Natural killer cell (primary cell): ENCODE measurements at regions of chr9 and their contacts with region 1.

Region 1: DNA sequence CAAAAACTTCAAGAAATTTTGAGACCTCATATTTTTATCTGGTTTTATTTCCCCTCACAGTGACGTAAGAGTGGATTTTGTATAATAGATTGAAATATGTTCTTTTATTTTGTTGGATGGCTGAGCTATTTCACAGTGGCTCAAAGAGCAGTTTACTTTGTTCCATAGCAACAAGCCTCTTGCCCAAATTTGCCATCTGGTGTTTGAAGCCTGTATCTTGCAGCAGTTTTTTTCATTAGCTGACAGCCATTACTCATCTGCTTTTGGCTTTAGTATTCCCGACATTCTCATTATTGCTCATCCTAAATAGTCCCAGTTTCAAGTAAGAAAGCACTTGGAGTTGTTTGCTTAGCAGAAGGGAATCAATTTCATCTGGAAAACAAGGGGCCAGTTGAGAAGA is 36.3 kb downstream of the GDA start:
- DNase-seq: no peak
- ATAC-seq: no peak
- H3K4me3 ChIP-seq: no peak overlapping the region
- H3K4me3 Mint-ChIP-seq: no peak overlapping the region
- H3K27ac ChIP-seq: no peak overlapping the region
- H3K27ac Mint-ChIP-seq: no peak overlapping the region
- H3K4me1 ChIP-seq: no peaks in the 10 kb centered on the region
- H3K4me1 Mint-ChIP-seq: no peaks in the 10 kb centered on the region
- H3K27me3 ChIP-seq: no peaks in the 10 kb centered on the region
- H3K27me3 Mint-ChIP-seq: peaks cover 6% of the 10 kb centered on the region in 2 donors
- CTCF ChIP-seq: no peak

Region 2: GRCh38 chr9:72173081-72173480 is 12.5 kb before region 1 on chr9:
- intact Hi-C with region 1: no loop called
- DNase-seq: no peak
- ATAC-seq: no peak
- H3K4me3 ChIP-seq: no peak overlapping the region
- H3K4me3 Mint-ChIP-seq: no peak overlapping the region
- H3K27ac ChIP-seq: no peak overlapping the region
- H3K27ac Mint-ChIP-seq: no peak overlapping the region
- H3K4me1 ChIP-seq: no peaks in the 10 kb centered on the region
- H3K4me1 Mint-ChIP-seq: no peaks in the 10 kb centered on the region
- H3K27me3 ChIP-seq: no peaks in the 10 kb centered on the region
- H3K27me3 Mint-ChIP-seq: peaks cover 0 to 5% of the 10 kb centered on the region in 2 donors
- CTCF ChIP-seq: no peak

Region 3: DNA sequence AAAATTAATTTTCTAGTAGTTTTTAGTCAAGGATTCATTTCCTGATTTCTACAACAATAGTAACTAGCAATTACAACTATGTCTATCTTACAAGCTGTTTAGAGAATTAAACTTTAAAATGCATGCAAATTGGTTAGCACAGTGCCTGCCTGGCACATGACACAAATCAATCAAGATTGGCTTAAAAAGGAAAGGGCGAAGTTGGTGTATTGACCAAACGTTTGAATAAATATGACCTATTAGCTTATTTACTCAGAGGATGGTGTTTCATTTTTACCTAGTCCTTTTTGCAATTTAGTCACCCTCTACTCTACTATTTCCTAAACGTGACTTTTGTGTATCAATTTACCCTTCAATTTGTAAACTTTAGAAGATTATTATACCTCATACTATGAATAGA is 47.2 kb after region 1 on chr9:
- intact Hi-C with region 1: loop called (anchors 5 kb)
- DNase-seq: no peak
- ATAC-seq: no peak
- H3K4me3 ChIP-seq: no peak overlapping the region
- H3K4me3 Mint-ChIP-seq: no peak overlapping the region
- H3K27ac ChIP-seq: no peak overlapping the region
- H3K27ac Mint-ChIP-seq: no peak overlapping the region
- H3K4me1 ChIP-seq: no peaks in the 10 kb centered on the region
- H3K4me1 Mint-ChIP-seq: no peaks in the 10 kb centered on the region
- H3K27me3 ChIP-seq: no peaks in the 10 kb centered on the region
- H3K27me3 Mint-ChIP-seq: peaks cover 5 to 14% of the 10 kb centered on the region in 2 donors
- CTCF ChIP-seq: no peak